ENCODE measurements at regions of chr2 and their contacts with region 1.

Region 1: GRCh38 chr2:15472876-15473275 is 88.3 kb downstream of the NBAS start:
- DNase-seq: no peak
- CTCF ChIP-seq: no peak

Region 2: DNA sequence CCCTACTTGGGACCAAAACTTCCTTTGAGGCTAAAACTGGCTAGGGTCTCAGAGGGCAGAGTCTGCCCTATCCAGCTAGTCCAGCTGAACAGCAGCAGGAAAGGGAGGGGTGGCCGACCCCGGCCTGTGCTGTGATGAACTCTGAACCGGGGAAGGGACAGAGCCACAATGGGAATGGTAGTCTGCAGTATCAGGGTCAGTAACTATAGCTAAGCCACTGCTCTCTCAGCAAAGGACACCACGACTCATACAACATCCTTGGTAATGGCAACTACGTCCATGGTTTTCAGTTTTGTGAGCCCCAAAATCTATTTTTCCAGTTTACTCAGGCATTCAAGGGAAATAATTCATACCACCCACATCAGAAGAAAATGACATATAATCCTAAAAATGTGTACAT is 13.1 kb after region 1 on chr2:
- CTCF ChIA-PET with region 1: interaction called, 10 read pairs
- POLR2A ChIA-PET with region 1: no interaction called
- DNase-seq: no peak
- CTCF ChIP-seq: no peak

Region 3: GRCh38 chr2:15511686-15512085 is 38.8 kb after region 1 on chr2:
- CTCF ChIA-PET with region 1: no interaction called
- POLR2A ChIA-PET with region 1: no interaction called
- DNase-seq: no peak
- CTCF ChIP-seq: no peak

Measured in GM10248 (cell line).